Heart right ventricle (tissue), 16 donors: ENCODE measurements at regions of chr17 and their contacts with region 1.

Region 1: DNA sequence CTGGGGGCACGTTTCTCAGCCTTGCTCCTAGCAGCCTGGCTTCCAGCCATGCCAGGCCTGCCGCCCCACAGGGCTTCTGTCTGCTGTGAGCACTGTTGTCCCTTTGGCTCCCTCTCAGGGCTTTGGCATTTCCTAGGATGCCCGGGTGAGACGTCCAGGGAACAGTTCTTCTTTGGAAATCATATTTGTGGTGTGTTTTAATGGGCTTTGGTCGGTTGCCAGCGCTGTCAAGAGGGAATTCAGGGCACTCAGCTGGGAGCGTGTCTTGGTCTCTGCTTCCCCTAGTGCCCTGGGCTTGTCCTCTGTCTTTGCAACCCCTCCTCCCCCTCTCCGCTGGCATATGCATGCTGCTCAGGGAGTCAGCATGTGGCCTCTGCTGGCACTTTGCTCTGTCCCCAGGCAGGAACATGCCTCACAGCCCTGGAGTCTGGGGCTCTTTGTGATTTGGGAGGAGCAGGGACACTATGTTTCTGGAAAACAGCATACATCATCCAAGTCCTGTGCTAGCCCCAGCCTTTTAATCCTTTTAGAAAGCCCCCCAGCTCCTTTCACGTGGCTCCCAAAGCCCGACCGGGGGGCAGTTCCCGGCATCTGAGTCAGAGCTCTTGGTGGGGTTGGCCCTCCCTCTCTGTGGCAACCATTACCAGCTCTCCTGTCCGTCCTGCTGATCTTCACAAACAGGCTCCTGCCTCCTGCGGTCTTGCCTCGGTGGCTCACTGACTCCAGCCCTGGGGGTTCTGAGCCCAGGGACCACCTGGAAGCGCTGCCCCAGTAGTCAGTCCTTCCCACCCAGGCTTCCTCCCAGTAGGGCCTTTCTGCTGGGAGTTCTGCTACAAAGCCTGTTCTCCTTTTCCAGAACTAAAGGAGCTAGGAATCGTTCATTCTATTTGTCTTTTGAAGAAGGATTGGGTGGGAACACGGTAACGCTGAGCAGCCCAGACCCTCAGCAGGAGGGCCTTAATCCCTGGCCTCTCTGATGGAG is 26.7 kb downstream of the SAP30BP start:
- DNase-seq: peak; percentile 76 to 78
- ATAC-seq: peak; percentile 73 to 91 (median 85)
- H3K4me3 ChIP-seq: no peak overlapping the region
- H3K27ac ChIP-seq: peak overlapping the region; percentile 58 to 97 (median 85)
- H3K4me1 ChIP-seq: peaks cover 18 to 97% (median 71%) of the 10 kb centered on the region in 9 donors
- H3K27me3 ChIP-seq: no peaks in the 10 kb centered on the region
- CTCF ChIP-seq: peak in 1 of 9 donors; percentile 29

Region 2: DNA sequence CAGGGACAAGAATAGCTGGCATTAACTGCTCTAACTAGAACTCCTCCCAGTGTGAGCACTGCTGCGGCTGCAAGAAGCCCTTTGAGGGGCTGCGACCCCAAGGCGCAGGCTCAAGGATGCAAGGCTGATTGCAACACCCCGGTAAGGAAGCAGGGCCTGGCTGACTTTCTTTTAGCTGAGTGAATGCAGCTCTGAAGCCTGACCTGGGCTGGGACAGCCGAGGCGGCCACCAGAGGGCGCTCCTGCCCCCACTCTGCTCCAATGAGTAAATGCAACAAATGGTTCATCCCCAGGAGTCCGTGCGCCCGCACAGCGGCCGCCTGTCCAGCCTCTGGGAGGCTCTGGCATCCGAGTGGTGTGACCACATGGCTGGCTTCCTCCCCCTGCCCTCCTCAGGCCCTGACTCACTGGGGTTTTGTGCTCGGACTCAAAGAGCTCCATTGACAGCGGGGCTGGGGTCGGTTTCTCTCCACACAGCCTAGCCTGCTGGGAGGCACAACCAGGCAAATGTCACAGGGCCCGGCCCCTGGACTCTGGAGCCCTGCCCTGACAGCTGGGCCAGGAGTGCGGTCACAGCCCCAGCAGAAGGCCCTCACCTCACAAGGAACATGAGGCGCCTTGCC is 60.8 kb before region 1 on chr17 and contains the start of gene SMIM5:
- intact Hi-C with region 1: loop called in 1 of 10 experiments (anchors 10 kb)
- DNase-seq: peak; percentile 86 to 91
- ATAC-seq: peak; percentile 66 to 84 (median 78)
- H3K4me3 ChIP-seq: peak within 1 kb of the TSS in 8 of 10 donors; percentile 13 to 39 (median 27)
- H3K27ac ChIP-seq: peak within 1 kb of the TSS; percentile 57 to 94 (median 89)
- H3K4me1 ChIP-seq: peaks cover 14 to 59% (median 45%) of the 10 kb centered on the region in 9 donors
- H3K27me3 ChIP-seq: no peaks in the 10 kb centered on the region
- CTCF ChIP-seq: peak; percentile 92 to 99 (median 98)
- total RNA-seq, gene SMIM5: 1.9 to 14.2 (median 6.5) TPM

Region 3: DNA sequence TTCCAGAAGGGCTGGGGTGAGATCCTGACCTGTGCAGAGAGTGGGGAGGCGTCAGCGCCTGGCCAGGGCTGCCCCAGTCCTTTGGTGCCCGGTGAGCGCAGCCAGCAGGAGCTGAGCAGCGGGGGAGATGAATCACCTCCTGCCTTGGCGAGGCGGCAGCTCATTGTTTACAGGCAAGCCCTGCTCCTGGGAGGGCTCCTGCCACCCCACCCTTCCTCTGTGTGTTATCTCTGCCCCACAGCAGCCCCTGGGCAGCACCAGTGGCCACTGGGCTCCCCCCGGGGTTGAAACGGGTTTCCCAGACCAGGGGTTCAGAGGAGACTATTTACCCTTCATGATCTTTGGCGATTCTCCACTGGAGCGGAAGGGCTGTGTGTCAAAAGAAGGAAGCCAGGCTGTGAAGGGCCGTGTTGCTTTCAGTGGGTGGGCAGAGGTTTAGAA is 13.4 kb after region 1 on chr17:
- intact Hi-C with region 1: loop called in 1 of 10 experiments (anchors 1 kb)
- DNase-seq: peak in 1 of 2 donors; percentile 69
- ATAC-seq: peak; percentile 66 to 87 (median 78)
- H3K4me3 ChIP-seq: no peak overlapping the region
- H3K27ac ChIP-seq: peak overlapping the region in 9 of 10 donors; percentile 42 to 73 (median 66)
- H3K4me1 ChIP-seq: peaks cover 0 to 35% (median 16%) of the 10 kb centered on the region in 9 donors
- H3K27me3 ChIP-seq: no peaks in the 10 kb centered on the region
- CTCF ChIP-seq: no peak

Region 4: DNA sequence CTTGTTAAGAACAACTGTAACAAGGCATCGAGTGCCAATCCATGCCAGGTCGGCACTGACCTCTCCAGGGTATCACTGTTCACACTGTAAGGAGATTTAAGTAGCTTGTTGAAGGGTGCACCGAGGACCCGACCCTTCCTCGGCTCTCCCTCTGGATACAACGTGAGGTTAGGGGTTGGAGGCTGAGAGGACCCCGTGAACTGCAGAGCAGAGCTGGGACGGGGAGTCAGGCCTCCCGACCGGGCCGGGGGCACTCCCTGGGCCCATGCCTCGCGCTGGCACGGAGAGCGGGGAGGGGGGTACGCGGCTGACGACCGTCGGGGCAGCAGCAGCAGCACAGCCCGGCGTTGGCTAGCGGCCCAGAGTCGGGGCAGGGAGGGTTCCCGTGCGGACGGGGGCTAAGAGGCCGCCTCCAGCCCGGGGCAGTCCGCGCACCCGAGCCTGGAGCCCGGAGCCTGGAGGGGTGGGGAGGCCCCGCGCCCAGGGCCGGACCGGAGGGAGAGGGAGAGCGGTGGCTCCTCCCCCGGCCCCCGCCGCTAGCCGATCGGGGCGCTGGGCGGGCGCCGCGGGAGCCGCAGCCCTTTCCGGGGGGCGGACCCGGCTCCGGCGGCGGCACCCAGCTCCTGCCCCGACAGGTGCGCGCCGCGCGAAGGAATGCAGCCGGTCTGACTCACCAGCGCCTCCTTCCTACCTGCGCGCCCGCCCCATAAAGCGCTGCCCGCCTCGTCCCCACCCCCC is 27.1 kb after region 1 on chr17 and contains the start of gene ITGB4:
- intact Hi-C with region 1: loop called in 1 of 10 experiments (anchors 5 kb)
- DNase-seq: peak in 1 of 2 donors; percentile 49
- ATAC-seq: peak; percentile 49 to 84 (median 56)
- H3K4me3 ChIP-seq: peak within 1 kb of the TSS; percentile 10 to 55 (median 52)
- H3K27ac ChIP-seq: peak within 1 kb of the TSS in 9 of 10 donors; percentile 39 to 79 (median 61)
- H3K4me1 ChIP-seq: peaks cover 0 to 26% (median 10%) of the 10 kb centered on the region in 9 donors
- H3K27me3 ChIP-seq: peaks cover 6 to 45% (median 26%) of the 10 kb centered on the region in 7 donors
- CTCF ChIP-seq: no peak
- total RNA-seq, gene ITGB4: 4.7 to 11.3 (median 9.0) TPM

Region 5: GRCh38 chr17:75731716-75732498 is 38.1 kb after region 1 on chr17:
- intact Hi-C with region 1: loop called in 1 of 10 experiments (anchors 5 kb)
- DNase-seq: no peak
- ATAC-seq: no peak
- H3K4me3 ChIP-seq: no peak overlapping the region
- H3K27ac ChIP-seq: no peak overlapping the region
- H3K4me1 ChIP-seq: peaks cover 0 to 5% (median 0%) of the 10 kb centered on the region in 9 donors
- H3K27me3 ChIP-seq: no peaks in the 10 kb centered on the region
- CTCF ChIP-seq: no peak

Region 6: DNA sequence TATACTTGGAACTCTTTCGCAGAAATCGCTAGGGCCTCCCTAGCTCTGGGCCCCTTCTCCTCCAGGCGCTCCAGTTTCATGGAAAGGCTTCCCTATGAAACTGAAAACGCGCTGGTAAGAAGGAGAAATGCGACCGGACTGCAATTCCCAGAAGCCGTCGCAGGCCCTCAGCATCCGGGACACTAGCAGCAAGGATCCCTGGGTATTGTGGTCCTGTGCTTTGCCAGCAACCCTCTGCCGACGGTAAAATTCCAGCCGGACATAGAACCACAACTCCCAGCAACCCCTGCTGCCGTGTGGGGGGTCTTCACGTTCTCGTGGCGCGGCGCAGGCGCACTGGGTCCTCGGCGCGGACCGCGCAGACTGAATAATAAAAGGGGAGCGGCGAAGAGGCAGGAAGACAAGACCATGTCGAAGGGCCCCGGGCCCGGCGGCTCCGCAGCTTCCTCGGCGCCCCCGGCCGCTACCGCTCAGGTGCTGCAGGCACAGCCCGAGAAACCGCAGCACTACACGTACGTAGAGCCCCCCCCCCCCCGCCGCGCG is 90.8 kb after region 1 on chr17 and contains the start of gene UNK:
- intact Hi-C with region 1: no loop called
- DNase-seq: peak; percentile 94 to 99
- ATAC-seq: peak; percentile 91 to 95 (median 93)
- H3K4me3 ChIP-seq: peak within 1 kb of the TSS; percentile 51 to 78 (median 70)
- H3K27ac ChIP-seq: peak within 1 kb of the TSS; percentile 97 to 100 (median 99)
- H3K4me1 ChIP-seq: peaks cover 7 to 73% (median 39%) of the 10 kb centered on the region in 9 donors
- H3K27me3 ChIP-seq: no peaks in the 10 kb centered on the region
- CTCF ChIP-seq: no peak
- total RNA-seq, gene UNK: 11.6 to 19.1 (median 14.7) TPM